ENCODE measurements at regions of chr3 and their contacts with region 1.

Region 1: DNA sequence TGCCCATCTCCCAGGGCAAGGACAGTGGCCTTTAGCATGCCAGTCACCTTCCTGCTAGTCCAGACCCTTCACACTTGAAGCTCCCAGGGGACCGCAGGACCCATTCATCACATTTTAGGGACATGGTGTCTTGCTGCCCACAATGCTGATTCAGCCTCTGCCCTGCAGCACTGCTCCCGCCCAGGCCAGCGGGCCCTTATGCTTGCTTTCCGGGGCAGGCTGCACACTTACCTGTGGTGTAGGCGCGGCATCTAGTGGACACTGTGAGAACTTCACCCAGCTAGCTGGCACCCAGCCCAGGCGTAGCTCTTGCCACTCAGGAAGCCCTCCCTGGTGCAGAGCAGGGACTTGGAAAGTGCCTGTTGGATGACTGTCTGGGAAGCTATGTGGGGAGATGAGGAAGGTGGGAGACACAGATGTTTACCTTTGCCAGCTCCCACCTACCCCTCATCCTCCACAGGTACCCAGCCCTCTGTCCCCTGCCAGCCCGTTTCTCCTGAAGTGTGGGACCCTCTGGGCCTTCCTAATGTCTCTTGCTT is 26.2 kb upstream of the NR2C2 start:
- DNase-seq: peak; percentile 89 to 91
- H3K4me3 ChIP-seq: no peak overlapping the region
- H3K27ac ChIP-seq: no peak overlapping the region
- H3K4me1 ChIP-seq: no peaks in the 10 kb centered on the region
- H3K27me3 ChIP-seq: no peaks in the 10 kb centered on the region
- CTCF ChIP-seq: peak; percentile 94 to 100 (median 98)
- POLR2A ChIP-seq: no peak

Region 2: DNA sequence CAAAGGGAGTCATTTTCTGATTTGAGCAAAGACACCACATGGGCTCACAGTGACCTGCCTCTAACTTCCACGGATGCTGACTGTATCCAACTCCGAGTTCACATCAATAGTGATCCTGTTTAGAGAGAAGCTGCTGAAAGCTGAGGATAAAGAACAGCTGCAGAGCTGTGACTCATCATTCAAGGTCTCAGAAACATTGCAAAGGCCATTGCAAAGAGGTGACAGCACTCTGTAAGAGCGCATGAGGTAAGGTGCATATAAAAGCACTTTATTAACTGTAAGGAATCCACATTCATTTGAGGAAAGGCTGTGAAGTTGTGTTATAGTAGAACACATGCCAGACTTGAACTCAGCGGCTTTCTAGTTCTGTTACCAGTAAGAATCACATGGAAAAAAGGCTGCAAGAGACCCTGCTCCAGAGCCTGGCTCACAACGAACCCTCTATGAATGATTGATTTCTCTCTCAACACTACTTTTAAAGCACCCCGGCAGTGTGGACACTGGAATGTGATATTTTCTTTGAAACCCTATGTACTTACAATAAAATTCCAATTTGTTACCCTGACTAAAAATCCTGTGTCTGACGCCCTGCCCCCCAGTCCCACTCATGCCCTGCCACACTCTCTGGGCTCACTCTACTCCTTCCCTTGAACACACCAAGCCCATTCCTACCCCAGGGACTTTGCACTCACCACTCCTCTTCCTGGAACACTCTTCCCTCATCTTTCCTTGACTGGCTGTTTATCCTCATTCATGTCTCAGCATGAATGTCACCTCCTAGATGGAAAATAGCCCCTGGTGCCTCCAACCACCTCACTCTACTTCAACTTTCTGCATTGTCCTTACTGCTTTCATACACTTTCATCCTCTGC is 631.3 kb before region 1 on chr3:
- intact Hi-C with region 1: no loop called
- DNase-seq: peak in 1 of 2 donors; percentile 43
- H3K4me3 ChIP-seq: no peak overlapping the region
- H3K27ac ChIP-seq: peak overlapping the region in 1 of 2 donors; percentile 14
- H3K4me1 ChIP-seq: no peaks in the 10 kb centered on the region
- H3K27me3 ChIP-seq: no peaks in the 10 kb centered on the region
- CTCF ChIP-seq: no peak
- POLR2A ChIP-seq: no peak

Region 3: DNA sequence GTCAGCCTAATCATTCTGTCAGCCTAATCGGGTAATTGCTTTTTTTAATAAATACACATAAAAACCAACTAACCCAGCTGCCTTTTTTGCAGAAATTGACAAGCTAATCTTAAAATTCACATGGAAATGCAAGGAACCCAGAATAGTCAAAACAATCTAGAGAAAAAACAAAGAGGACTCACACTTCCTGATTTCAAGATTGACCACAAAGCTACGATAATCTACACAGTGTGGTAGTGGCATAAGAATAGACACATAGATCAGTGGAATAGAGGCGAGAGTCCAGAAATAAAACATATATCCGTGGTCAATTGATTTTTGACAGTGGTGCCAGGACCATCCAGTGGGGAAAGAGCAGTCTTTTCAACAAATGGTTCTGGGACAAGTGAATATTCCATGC is 248.6 kb before region 1 on chr3:
- intact Hi-C with region 1: loop called (anchors 2 kb)
- DNase-seq: no peak
- H3K4me3 ChIP-seq: no peak overlapping the region
- H3K27ac ChIP-seq: no peak overlapping the region
- H3K4me1 ChIP-seq: no peaks in the 10 kb centered on the region
- H3K27me3 ChIP-seq: no peaks in the 10 kb centered on the region
- CTCF ChIP-seq: no peak
- POLR2A ChIP-seq: no peak

Region 4: DNA sequence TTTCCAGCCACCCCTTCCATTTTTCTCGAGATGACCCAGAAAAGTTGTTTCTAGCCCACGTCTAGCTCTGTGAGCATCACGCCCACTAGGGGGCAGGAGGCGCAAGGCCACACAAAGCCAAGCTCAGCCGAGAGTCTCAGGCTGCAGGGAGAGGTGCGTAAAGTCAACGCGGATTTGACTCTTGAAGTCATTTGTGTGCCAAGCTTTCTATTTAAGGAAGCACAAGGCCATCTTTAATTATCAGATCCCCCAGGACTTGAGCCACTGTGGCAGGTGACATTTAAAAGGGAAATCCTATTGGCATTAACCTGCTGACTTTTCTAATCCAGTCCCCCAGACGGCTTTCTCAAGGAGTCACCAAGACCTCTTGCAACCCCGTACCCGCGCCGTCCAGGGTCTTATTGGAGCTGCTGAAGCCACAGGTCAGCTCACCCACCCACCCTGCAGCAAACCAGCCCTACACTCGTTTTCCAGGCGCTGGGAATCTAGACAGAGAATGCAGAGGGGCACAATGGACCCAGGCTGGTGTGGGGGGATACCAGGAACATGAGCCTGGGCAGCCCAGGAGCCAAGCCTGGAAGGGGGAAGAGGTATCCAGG is 347.0 kb after region 1 on chr3:
- intact Hi-C with region 1: no loop called
- DNase-seq: peak; percentile 88
- H3K4me3 ChIP-seq: no peak overlapping the region
- H3K27ac ChIP-seq: peak overlapping the region; percentile 93 to 98
- H3K4me1 ChIP-seq: peaks cover 15 to 25% of the 10 kb centered on the region in 2 donors
- H3K27me3 ChIP-seq: no peaks in the 10 kb centered on the region
- CTCF ChIP-seq: peak; percentile 93 to 97 (median 95)
- POLR2A ChIP-seq: no peak